ENCODE measurements at regions of chr1 and their contacts with region 1.

Region 1: DNA sequence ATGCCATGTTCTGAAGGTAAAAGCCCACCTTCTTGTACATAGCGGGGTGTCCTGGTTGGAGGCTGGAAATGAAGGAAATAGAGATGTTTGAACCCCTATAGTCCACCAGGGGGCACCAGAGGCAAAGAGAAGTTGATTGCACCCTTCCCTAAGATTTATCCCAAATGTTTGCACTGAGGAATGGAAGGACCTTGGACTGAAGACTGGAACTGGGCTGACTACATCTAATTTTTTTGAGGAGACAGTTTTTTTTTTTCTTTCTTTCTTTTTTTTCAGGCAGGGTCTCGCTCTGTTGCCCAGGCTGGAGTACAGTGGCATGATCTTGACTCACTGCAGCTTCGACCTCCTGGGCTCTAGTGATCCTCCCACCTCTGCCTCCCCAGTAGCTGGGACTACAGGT is 55.3 kb upstream of the EIF4G3 start:
- DNase-seq: peak in 1 of 2 donors; percentile 32
- ATAC-seq: peak; percentile 46 to 70
- H3K4me3 ChIP-seq: no peak overlapping the region
- H3K27ac ChIP-seq: no peak overlapping the region
- H3K4me1 ChIP-seq: no peaks in the 10 kb centered on the region
- H3K27me3 ChIP-seq: no peaks in the 10 kb centered on the region
- CTCF ChIP-seq: peak; percentile 72 to 85 (median 79)
- POLR2A ChIP-seq: no peak

Region 2: GRCh38 chr1:21659099-21659923 is 427.3 kb after region 1 on chr1:
- in situ Hi-C with region 1: loop called in 1 of 4 experiments (anchors 25 kb)
- intact Hi-C with region 1: no loop called
- DNase-seq: peak; percentile 20 to 27
- ATAC-seq: peak in 1 of 2 donors; percentile 53
- H3K4me3 ChIP-seq: no peak overlapping the region
- H3K27ac ChIP-seq: no peak overlapping the region
- H3K4me1 ChIP-seq: no peaks in the 10 kb centered on the region
- H3K27me3 ChIP-seq: peaks cover 5 to 16% (median 13%) of the 10 kb centered on the region in 3 donors
- CTCF ChIP-seq: peak; percentile 71 to 86 (median 85)
- POLR2A ChIP-seq: no peak